HAP-1 (cell line): ENCODE measurements at regions of chr5 and their contacts with region 1.

Region 1: GRCh38 chr5:142548739-142549275 is 137.1 kb downstream of the FGF1 start:
- DNase-seq: peak; percentile 63 to 76
- H3K4me3 ChIP-seq: no peak overlapping the region
- H3K4me1 ChIP-seq: no peaks in the 10 kb centered on the region
- H3K27me3 ChIP-seq: peaks cover 23% of the 10 kb centered on the region

Region 2: GRCh38 chr5:141992349-141992963 is 556.4 kb before region 1 on chr5:
- in situ Hi-C with region 1: loop called (anchors 25 kb)
- DNase-seq: peak; percentile 36 to 83
- H3K4me3 ChIP-seq: no peak overlapping the region
- H3K4me1 ChIP-seq: no peaks in the 10 kb centered on the region
- H3K27me3 ChIP-seq: no peaks in the 10 kb centered on the region

Region 3: GRCh38 chr5:142151436-142152383 is 397.1 kb before region 1 on chr5:
- in situ Hi-C with region 1: loop called (anchors 25 kb)
- DNase-seq: peak; percentile 37 to 71
- H3K4me3 ChIP-seq: no peak overlapping the region
- H3K4me1 ChIP-seq: no peaks in the 10 kb centered on the region
- H3K27me3 ChIP-seq: no peaks in the 10 kb centered on the region

Region 4: DNA sequence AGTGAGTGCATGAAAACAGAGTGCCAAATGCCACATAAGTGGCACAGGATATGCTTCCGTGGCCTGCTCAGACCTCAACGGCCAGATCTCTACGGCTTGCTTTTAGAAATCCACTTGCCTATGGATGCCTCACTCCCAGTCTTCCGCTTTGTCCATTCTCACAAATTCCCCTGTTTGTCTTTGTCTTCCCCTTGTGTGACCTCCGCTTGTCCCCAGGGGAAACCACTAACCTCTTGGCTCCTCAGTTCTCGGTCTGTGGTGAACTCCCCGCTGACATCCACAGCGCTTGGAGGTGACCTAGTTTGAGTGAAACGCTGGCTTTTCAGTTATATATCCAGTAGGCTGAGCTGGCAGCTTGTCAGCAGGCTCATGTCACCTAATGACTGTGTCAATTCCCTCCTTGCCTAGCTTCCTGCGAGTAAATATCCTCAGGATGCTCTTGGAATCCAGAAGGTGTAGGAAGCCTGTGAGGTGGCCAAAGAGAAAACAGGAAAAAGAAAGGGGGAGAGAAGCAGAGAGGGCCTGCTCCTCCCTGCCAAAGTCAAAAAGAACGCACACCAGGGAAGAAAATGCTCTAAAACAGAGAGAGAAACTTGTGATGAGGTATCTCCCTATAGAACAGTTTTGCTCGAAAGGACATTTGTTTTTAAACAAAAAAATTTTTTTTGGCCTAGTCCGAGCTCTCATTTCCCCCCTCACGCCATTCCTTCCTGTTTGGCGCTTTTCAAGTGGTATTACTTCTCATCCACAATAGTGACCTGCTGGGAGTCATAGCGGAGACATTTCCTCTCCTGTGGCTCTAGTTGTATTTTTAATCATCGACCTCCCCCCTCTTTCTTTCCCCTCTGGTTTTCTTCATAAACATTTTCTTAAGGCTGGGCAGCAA is 122.4 kb before region 1 on chr5:
- in situ Hi-C with region 1: no loop called
- DNase-seq: no peak
- H3K4me3 ChIP-seq: no peak overlapping the region
- H3K4me1 ChIP-seq: no peaks in the 10 kb centered on the region; the same call in 1 of the 2 replicates
- H3K27me3 ChIP-seq: no peaks in the 10 kb centered on the region